Transverse colon (tissue), 4 donors: ENCODE measurements at regions of chr4 and their contacts with region 1.

Region 1: DNA sequence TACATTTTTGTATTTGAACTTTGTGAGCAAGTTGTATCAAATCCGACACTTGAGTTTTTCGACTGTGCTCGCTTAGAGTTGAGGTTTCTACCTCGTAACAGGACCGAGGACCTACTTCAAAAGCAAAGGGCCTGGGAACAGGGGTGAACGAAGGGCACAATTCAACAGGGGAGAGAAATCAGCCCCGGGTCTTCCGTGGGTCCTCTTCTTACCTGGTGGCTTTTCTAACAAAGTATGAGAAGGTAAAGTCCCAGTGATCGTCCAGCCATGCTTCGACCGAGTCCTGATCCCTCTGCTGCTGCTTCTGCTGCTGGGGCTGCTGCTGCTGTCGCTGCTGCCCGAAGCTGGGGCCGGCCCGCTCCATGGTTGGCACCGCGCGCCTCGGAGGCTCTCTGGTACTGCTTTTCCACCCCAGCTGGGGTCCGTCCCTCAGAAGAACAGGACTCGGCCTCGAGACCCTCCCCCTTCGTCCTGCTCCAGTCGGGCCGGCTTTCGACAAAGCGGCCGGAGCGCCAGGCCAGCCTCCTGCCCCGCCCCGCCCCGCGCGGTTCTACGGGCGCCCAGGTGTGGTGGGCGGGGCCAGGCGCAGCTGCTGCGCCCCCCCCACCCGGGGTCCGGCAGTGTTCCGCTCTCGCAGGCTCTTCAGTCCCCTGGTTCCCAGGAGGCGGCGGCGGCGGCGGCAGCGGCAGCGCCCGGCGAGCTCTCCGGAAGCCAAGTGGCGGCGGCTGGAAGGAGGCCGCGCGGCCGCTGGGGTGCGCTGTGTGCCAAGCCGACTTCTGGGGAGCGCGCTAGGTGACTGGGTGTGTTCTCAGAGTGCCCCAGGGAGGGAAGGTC is at the start of gene PDE5A:
- DNase-seq: peak; percentile 90
- H3K4me3 ChIP-seq: peak within 1 kb of the TSS; percentile 49 to 90 (median 78)
- H3K27ac ChIP-seq: peak within 1 kb of the TSS; percentile 93 to 96 (median 94)
- H3K4me1 ChIP-seq: peaks cover 10 to 35% (median 19%) of the 10 kb centered on the region in 4 donors
- H3K27me3 ChIP-seq: no peaks in the 10 kb centered on the region
- CTCF ChIP-seq: peak; percentile 75 to 94 (median 80)
- EP300 ChIP-seq: no peak
- POLR2A ChIP-seq: peak; percentile 71
- total RNA-seq, gene PDE5A: 34.6 to 52.7 (median 46.4) TPM

Region 2: GRCh38 chr4:119300101-119300978 is 328.2 kb before region 1 on chr4:
- in situ Hi-C with region 1: loop called in 1 of 4 experiments (anchors 25 kb)
- intact Hi-C with region 1: no loop called
- DNase-seq: peak; percentile 97
- H3K4me3 ChIP-seq: peak overlapping the region; percentile 39 to 85 (median 62)
- H3K27ac ChIP-seq: peak overlapping the region; percentile 94 to 97 (median 94)
- H3K4me1 ChIP-seq: peaks cover 6 to 30% (median 27%) of the 10 kb centered on the region in 4 donors
- H3K27me3 ChIP-seq: no peaks in the 10 kb centered on the region
- CTCF ChIP-seq: peak in 2 of 5 experiments; percentile 9 to 40
- EP300 ChIP-seq: peak; percentile 7
- POLR2A ChIP-seq: peak; percentile 91

Region 3: DNA sequence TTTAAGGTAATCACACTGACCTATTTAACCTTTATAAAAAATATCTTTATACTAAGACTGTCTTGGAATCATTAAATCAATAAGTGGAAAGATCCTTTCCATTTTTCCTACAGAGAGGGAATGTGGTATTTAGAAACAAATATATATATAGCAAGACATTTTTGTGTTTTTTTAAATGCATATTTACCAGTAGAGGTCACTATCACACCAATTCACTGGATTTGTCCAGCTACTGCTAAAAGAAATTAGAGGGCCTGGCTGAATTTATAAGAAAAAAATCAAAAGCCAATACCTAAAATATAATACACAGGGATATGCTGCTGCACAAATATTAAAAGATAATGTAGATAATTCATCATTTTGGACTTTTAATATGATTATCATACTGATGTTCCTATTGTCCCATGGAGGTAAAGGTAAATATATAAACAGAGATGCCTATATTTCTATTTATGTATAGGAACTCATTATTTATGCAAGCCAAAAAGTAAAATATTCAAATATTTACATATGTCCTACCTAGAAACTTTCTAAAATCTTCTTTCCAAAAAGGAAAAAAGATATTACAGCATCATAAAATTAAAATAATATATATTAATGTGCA is 69.4 kb before region 1 on chr4:
- in situ Hi-C with region 1: loop called in 1 of 4 experiments (anchors 10 kb)
- intact Hi-C with region 1: loop called (anchors 2 kb)
- DNase-seq: no peak
- H3K4me3 ChIP-seq: no peak overlapping the region
- H3K27ac ChIP-seq: no peak overlapping the region
- H3K4me1 ChIP-seq: no peaks in the 10 kb centered on the region
- H3K27me3 ChIP-seq: no peaks in the 10 kb centered on the region
- CTCF ChIP-seq: peak; percentile 47 to 63 (median 58)
- EP300 ChIP-seq: no peak
- POLR2A ChIP-seq: no peak

Region 4: GRCh38 chr4:119785963-119786362 is 157.4 kb after region 1 on chr4:
- in situ Hi-C with region 1: loop called in 1 of 4 experiments (anchors 10 kb)
- intact Hi-C with region 1: no loop called
- DNase-seq: peak; percentile 34
- H3K4me3 ChIP-seq: no peak overlapping the region
- H3K27ac ChIP-seq: no peak overlapping the region
- H3K4me1 ChIP-seq: no peaks in the 10 kb centered on the region
- H3K27me3 ChIP-seq: no peaks in the 10 kb centered on the region
- CTCF ChIP-seq: peak; percentile 37 to 66 (median 38)
- EP300 ChIP-seq: no peak
- POLR2A ChIP-seq: no peak